Uterus (tissue), 4 donors: ENCODE measurements at regions of chr7 and their contacts with region 1.

Region 1: DNA sequence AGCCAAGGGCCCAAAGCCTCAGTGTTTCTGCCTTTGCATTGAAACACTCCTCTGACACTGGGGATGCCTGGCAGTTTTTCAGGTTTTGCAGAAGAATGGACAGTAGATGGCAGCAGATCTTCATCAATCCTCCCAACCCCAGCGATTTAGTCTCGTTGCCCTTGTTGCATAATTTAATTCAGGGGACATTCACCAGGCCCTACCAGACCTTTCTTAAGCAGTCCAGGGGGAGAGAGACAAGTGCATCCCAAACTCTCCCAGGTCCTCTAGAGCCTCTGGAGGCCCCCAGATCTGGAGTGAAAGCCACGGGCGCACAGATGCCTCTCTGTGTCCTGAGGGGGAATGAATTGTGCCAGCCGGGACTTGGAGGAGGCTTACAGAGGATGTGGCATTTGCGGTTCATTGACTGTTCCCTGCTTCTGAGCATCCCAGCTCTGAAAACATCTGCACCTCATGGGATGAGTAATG is 29.6 kb downstream of the MINDY4 start:
- DNase-seq: peak; percentile 68 to 73
- H3K4me3 ChIP-seq: no peak overlapping the region
- H3K27ac ChIP-seq: peak overlapping the region in 1 of 2 donors; percentile 20
- H3K4me1 ChIP-seq: peaks cover 9% of the 10 kb centered on the region in 2 donors
- H3K27me3 ChIP-seq: no peaks in the 10 kb centered on the region
- CTCF ChIP-seq: peak; percentile 64 to 88 (median 78)
- POLR2A ChIP-seq: no peak

Region 2: GRCh38 chr7:30911561-30911969 is 110.7 kb after region 1 on chr7 and contains the start of gene AQP1:
- intact Hi-C with region 1: no loop called
- DNase-seq: peak; percentile 69 to 76
- H3K4me3 ChIP-seq: peak within 1 kb of the TSS; percentile 9 to 16
- H3K27ac ChIP-seq: peak within 1 kb of the TSS; percentile 34 to 68
- H3K4me1 ChIP-seq: peaks cover 0 to 6% of the 10 kb centered on the region in 2 donors
- H3K27me3 ChIP-seq: no peaks in the 10 kb centered on the region
- CTCF ChIP-seq: no peak
- POLR2A ChIP-seq: peak in 1 of 2 donors; percentile 75
- total RNA-seq, gene AQP1: 69.6 to 477 (median 370) TPM

Region 3: GRCh38 chr7:30974605-30975255 is 173.9 kb after region 1 on chr7:
- intact Hi-C with region 1: loop called (anchors 10 kb)
- DNase-seq: peak in 1 of 2 donors; percentile 33
- H3K4me3 ChIP-seq: no peak overlapping the region
- H3K27ac ChIP-seq: no peak overlapping the region
- H3K4me1 ChIP-seq: no peaks in the 10 kb centered on the region
- H3K27me3 ChIP-seq: no peaks in the 10 kb centered on the region
- CTCF ChIP-seq: peak; percentile 35 to 57 (median 48)
- POLR2A ChIP-seq: no peak

Region 4: DNA sequence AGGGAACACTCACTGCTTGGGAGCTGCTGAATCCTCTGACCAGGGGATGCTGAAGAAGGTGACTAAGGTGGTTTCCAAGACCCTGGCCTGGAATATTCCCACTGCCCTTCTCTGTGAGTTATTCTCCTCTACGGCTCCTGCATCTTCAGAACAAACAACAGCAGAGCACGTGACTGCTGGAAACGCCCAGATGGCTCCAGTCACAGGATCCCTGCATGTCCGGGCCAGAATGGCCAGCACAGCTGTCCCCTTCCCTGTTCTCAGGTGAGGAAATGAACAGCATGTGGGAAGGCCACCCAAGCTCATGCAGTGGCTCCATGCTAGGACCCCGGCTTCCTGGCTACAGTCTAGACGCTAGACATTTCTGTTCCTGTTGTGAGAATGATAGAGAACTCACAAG is 206.0 kb after region 1 on chr7:
- intact Hi-C with region 1: no loop called
- DNase-seq: no peak
- H3K4me3 ChIP-seq: no peak overlapping the region
- H3K27ac ChIP-seq: peak overlapping the region; percentile 29 to 35
- H3K4me1 ChIP-seq: no peaks in the 10 kb centered on the region
- H3K27me3 ChIP-seq: no peaks in the 10 kb centered on the region
- CTCF ChIP-seq: no peak
- POLR2A ChIP-seq: no peak